Activated CD4-positive, alpha-beta memory T cell treated with anti-CD3 and anti-CD28 coated beads, Interleukin-2, amount 10 ng/mL, durations not matched to agents 7 days and 5 days (primary cell): ENCODE measurements at regions of chr6 and their contacts with region 1.

Region 1: DNA sequence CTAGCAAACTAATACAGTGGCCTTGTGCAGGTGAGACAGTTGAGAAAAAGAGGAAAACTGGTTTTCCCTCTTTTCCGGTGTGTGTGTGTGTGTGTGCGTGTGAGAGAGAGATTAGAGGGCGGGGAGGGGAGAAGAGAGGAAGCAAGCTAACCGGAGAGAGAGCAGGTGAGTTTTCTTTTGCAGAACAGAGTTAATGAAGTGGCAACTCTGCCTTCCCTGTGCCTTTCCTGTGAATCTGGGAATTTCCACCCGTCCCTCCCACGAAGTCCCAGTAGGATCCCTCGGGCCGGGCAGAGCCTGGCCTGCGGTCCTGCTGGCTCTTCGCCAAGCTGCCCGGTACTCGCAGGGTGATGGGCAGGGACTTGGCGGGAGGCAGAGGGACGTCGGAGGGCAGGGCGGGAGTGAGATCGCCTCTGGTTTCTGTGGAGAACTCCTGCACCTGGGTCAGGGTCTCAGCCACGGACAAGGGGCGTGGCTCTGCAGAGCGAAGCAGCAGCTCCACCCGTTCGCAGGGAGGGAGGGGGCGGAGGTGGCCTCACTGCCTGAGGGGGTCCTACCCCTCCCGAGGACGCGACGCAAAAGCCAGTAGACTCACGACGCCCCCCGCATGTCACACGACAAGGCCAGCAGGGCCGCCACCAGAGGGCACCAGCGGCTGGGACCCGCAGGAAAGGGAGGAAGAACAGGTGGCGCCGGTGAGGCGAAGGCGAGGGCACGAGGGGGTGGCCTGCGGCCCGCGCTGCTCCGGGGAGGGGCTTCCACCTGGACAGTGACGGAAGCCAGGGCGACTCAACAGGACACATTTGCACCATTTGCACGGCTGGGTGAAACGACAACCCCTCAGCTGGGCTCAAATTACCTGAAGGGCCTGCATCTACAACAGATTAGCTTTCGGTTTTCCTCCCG is 51.2 kb upstream of the RNF182 start:
- DNase-seq: peak; percentile 69
- H3K4me3 Mint-ChIP-seq: peak overlapping the region; percentile 63
- H3K27ac Mint-ChIP-seq: no peak overlapping the region
- H3K4me1 Mint-ChIP-seq: peaks cover 10% of the 10 kb centered on the region
- H3K27me3 Mint-ChIP-seq: peaks cover 24% of the 10 kb centered on the region

Region 2: DNA sequence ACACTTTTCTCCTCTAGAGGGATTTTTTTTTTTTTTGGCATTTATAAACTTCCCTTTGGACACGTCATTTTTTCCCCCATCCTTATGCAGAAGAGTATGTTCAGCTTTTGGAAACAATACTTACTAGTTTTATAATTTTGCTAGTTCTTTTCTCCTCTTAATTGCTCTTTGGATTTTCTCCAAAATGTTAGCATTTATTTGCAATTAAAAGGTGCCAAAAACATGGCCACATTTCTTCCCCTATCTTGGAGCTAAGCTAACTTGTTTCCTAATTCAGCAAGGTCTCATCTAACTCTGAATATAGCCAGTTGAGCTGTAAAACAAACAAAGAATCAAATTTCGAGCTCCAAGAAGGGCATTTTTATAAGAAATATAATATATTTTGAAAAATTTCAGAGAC is 12.1 kb after region 1 on chr6:
- CTCF ChIA-PET with region 1: interaction called, 16 read pairs
- POLR2A ChIA-PET with region 1: no interaction called
- DNase-seq: no peak
- H3K4me3 Mint-ChIP-seq: no peak overlapping the region
- H3K27ac Mint-ChIP-seq: no peak overlapping the region
- H3K4me1 Mint-ChIP-seq: no peaks in the 10 kb centered on the region
- H3K27me3 Mint-ChIP-seq: peaks cover 2% of the 10 kb centered on the region